ENCODE measurements at regions of chr15 and their contacts with region 1.

Region 1: DNA sequence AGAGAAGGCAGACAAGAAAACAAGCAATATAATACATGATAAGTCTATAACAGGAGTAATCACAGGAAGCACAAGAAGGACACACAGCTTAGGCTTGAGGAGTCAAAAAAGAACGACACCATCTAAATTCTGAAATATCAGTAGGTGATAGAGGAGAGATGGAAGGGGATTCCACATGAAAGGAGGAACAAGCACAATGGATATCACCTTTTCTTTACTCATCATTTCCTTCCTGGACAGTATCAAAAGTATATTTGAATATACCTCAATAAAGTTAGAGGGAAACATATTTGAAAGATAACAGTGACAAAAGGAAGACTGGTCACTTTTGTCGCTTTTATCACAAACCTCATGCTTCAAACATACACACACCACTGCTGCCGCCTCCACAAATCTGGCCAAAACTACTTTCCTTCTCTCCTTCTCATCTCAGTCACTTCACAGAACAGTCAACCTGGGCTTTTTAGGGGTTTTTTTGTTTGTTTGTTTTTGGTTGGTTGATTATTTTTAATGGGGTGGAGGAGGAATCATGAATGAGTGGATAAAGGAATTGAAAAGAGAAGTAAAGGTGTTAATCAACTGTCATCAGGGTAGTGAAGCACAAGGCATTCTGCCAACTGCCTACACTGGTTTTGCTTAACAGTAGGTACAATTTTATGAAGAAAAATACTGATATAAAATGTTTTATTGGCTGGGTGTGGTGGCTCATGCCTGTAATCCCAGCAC is 18.5 kb downstream of the DENND4A start:
- DNase-seq: peak; percentile 88
- ATAC-seq: peak; percentile 78
- H3K4me3 ChIP-seq: no peak overlapping the region; the same call in 1 of the 2 replicates
- H3K27ac ChIP-seq: peak overlapping the region; percentile 84
- H3K4me1 ChIP-seq: peaks cover 21% of the 10 kb centered on the region
- H3K27me3 ChIP-seq: no peaks in the 10 kb centered on the region
- CTCF ChIP-seq: no peak
- EP300 ChIP-seq: peak; percentile 45 to 63; a peak in 3 of 4 replicates
- POLR2A ChIP-seq: no peak
- RAD21 ChIP-seq: peak; percentile 25; the same call in 1 of the 2 replicates

Region 2: GRCh38 chr15:65761210-65761926 is 12.2 kb before region 1 on chr15:
- CTCF ChIA-PET with region 1: interaction called, 7 read pairs
- POLR2A ChIA-PET with region 1: interaction called, 5 read pairs
- RAD21 ChIA-PET with region 1: interaction called, 3 read pairs
- SMC1A ChIA-PET with region 1: interaction called, 12 read pairs
- in situ Hi-C with region 1: no loop called
- intact Hi-C with region 1: no loop called
- DNase-seq: no peak
- ATAC-seq: peak; percentile 53
- H3K4me3 ChIP-seq: peak overlapping the region; percentile 37
- H3K27ac ChIP-seq: peak overlapping the region; percentile 74
- H3K4me1 ChIP-seq: peaks cover 31% of the 10 kb centered on the region
- H3K27me3 ChIP-seq: no peaks in the 10 kb centered on the region
- CTCF ChIP-seq: no peak
- EP300 ChIP-seq: peak in 1 of 2 experiments; percentile 45; a peak in 1 of 4 replicates
- POLR2A ChIP-seq: no peak
- RAD21 ChIP-seq: no peak

Region 3: DNA sequence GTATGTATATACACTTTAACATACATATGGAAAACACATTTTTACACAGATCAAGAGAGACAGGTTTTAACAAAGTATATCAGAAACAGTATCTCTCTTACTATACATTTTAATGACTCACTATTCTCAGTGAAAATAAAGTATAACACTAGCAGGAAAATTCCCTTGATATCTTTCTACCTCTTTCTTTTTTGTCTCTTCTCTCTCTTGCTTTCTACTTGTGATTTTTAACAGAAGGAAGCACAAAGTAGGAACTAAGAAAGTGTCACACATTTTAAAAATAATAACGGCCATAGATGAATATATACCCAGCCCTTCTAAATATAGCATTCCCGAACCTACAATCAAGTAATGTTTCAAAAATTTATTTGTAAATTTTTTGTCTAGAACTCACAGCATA is 13.7 kb after region 1 on chr15:
- CTCF ChIA-PET with region 1: interaction called, 6 read pairs
- POLR2A ChIA-PET with region 1: interaction called, 86 read pairs
- RAD21 ChIA-PET with region 1: interaction called, 37 read pairs
- SMC1A ChIA-PET with region 1: interaction called, 28 read pairs
- in situ Hi-C with region 1: no loop called
- intact Hi-C with region 1: no loop called
- DNase-seq: no peak
- ATAC-seq: no peak
- H3K4me3 ChIP-seq: peak overlapping the region; percentile 69
- H3K27ac ChIP-seq: peak overlapping the region; percentile 84
- H3K4me1 ChIP-seq: no peaks in the 10 kb centered on the region; the same call in 1 of the 2 replicates
- H3K27me3 ChIP-seq: no peaks in the 10 kb centered on the region
- CTCF ChIP-seq: no peak
- EP300 ChIP-seq: no peak
- POLR2A ChIP-seq: no peak
- RAD21 ChIP-seq: no peak

Region 4: GRCh38 chr15:65804252-65804931 is 30.8 kb after region 1 on chr15:
- CTCF ChIA-PET with region 1: no interaction called
- POLR2A ChIA-PET with region 1: interaction called, 11 read pairs
- RAD21 ChIA-PET with region 1: interaction called, 3 read pairs
- SMC1A ChIA-PET with region 1: interaction called, 3 read pairs
- in situ Hi-C with region 1: no loop called
- intact Hi-C with region 1: no loop called
- DNase-seq: no peak
- ATAC-seq: peak; percentile 40
- H3K4me3 ChIP-seq: no peak overlapping the region
- H3K27ac ChIP-seq: peak overlapping the region; percentile 10; the same call in 1 of the 2 replicates
- H3K4me1 ChIP-seq: peaks cover 27% of the 10 kb centered on the region
- H3K27me3 ChIP-seq: no peaks in the 10 kb centered on the region
- CTCF ChIP-seq: no peak
- EP300 ChIP-seq: no peak
- POLR2A ChIP-seq: no peak
- RAD21 ChIP-seq: no peak

Region 5: GRCh38 chr15:65818927-65819562 is 45.5 kb after region 1 on chr15:
- CTCF ChIA-PET with region 1: interaction called, 11 read pairs
- POLR2A ChIA-PET with region 1: interaction called, 10 read pairs
- RAD21 ChIA-PET with region 1: interaction called, 9 read pairs
- SMC1A ChIA-PET with region 1: interaction called, 30 read pairs
- in situ Hi-C with region 1: no loop called
- intact Hi-C with region 1: loop called (anchors 5 kb)
- DNase-seq: peak; percentile 78
- ATAC-seq: peak; percentile 78
- H3K4me3 ChIP-seq: no peak overlapping the region
- H3K27ac ChIP-seq: peak overlapping the region; percentile 56
- H3K4me1 ChIP-seq: peaks cover 62% of the 10 kb centered on the region
- H3K27me3 ChIP-seq: no peaks in the 10 kb centered on the region
- CTCF ChIP-seq: no peak
- EP300 ChIP-seq: peak; percentile 100
- POLR2A ChIP-seq: no peak
- RAD21 ChIP-seq: no peak

Region 6: DNA sequence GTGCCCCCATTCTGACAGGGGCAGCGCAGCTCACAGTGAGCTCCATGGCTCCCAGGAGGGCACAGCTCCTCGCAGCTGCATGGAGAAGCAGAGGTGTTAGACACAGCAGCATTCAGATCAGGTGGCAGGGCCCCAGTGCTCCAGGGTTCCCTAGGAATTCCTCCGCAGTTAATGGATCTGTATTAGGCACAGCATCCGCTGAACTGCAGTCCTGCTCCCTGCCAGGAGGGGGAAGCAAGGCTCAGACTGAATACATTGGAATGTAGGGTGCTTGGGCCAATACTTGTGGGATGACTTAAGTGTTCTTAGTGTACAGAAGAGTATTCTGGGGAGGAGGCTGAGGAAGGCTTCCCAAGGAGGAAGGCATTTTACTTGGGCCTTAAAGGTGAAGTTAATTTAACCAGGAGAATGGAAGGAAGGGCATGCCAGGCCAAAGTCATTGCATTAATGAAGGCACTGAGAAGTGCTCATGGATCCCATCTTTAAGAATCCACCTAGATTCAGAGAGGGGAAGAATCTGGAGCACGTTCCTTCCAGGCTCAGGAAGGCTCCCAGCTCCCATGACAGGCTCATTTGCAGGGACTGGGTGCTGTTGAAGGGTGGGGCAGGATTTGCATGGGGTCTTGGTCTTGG is 207.4 kb after region 1 on chr15:
- CTCF ChIA-PET with region 1: no interaction called
- POLR2A ChIA-PET with region 1: no interaction called
- RAD21 ChIA-PET with region 1: no interaction called
- SMC1A ChIA-PET with region 1: no interaction called
- in situ Hi-C with region 1: no loop called
- intact Hi-C with region 1: no loop called
- DNase-seq: no peak
- ATAC-seq: peak; percentile 43
- H3K4me3 ChIP-seq: no peak overlapping the region
- H3K27ac ChIP-seq: no peak overlapping the region
- H3K4me1 ChIP-seq: no peaks in the 10 kb centered on the region; the same call in 1 of the 2 replicates
- H3K27me3 ChIP-seq: peaks cover 0 to 1% of the 10 kb centered on the region in 2 experiments; a peak in 1 of 4 replicates
- CTCF ChIP-seq: peak; percentile 53 to 68 (median 56)
- EP300 ChIP-seq: no peak
- POLR2A ChIP-seq: no peak
- RAD21 ChIP-seq: peak; percentile 52